Panc1 (cell line): ENCODE measurements at regions of chr7 and their contacts with region 1.

Region 1: GRCh38 chr7:2384354-2385243 is 18.8 kb upstream of the CHST12 start:
- DNase-seq: no peak
- ATAC-seq: peak; percentile 52
- H3K4me3 ChIP-seq: no peak overlapping the region
- H3K27ac ChIP-seq: no peak overlapping the region
- H3K4me1 ChIP-seq: no peaks in the 10 kb centered on the region
- H3K27me3 ChIP-seq: no peaks in the 10 kb centered on the region
- CTCF ChIP-seq: no peak

Region 2: DNA sequence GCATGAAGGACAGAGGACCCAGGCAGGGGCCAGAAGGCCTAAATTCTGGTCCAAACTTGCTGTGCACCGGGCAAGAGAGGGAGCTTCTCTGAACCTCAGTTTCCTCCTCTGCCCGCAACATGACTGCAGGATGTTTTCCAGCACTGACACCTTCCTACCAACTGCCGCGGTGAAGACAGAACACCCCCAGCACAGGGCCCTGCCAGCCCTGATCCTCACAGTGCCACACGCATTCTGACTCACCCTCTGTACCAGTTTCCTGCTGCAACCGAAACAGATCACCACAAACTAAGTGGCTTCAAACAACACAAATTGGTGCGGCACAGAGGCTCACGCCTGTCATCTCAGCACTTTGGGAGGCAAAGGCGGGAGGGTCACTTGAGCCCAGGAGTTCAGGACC is 170.0 kb before region 1 on chr7:
- CTCF ChIA-PET with region 1: no interaction called
- POLR2A ChIA-PET with region 1: interaction called, 11 read pairs
- in situ Hi-C with region 1: no loop called
- intact Hi-C with region 1: no loop called
- DNase-seq: no peak
- ATAC-seq: no peak
- H3K4me3 ChIP-seq: no peak overlapping the region
- H3K27ac ChIP-seq: no peak overlapping the region
- H3K4me1 ChIP-seq: no peaks in the 10 kb centered on the region
- H3K27me3 ChIP-seq: no peaks in the 10 kb centered on the region
- CTCF ChIP-seq: no peak